T-cell (primary cell): ENCODE measurements at regions of chr12 and their contacts with region 1.

Region 1: GRCh38 chr12:47397664-47398281 is 308.1 kb downstream of the RPAP3 start:
- DNase-seq: peak in 21 of 35 experiments; percentile 22 to 73 (median 29)
- ATAC-seq: peak; percentile 88 to 90 (median 89)
- H3K4me3 ChIP-seq: no peak overlapping the region
- H3K4me3 Mint-ChIP-seq: peak overlapping the region; percentile 18 to 49 (median 36)
- H3K27ac ChIP-seq: peak overlapping the region; percentile 22
- H3K27ac Mint-ChIP-seq: peak overlapping the region; percentile 87 to 93
- H3K4me1 ChIP-seq: peaks cover 5 to 29% of the 10 kb centered on the region in 2 experiments
- H3K4me1 Mint-ChIP-seq: peaks cover 41 to 70% (median 49%) of the 10 kb centered on the region in 3 donors
- H3K27me3 ChIP-seq: no peaks in the 10 kb centered on the region
- H3K27me3 Mint-ChIP-seq: no peaks in the 10 kb centered on the region

Region 2: DNA sequence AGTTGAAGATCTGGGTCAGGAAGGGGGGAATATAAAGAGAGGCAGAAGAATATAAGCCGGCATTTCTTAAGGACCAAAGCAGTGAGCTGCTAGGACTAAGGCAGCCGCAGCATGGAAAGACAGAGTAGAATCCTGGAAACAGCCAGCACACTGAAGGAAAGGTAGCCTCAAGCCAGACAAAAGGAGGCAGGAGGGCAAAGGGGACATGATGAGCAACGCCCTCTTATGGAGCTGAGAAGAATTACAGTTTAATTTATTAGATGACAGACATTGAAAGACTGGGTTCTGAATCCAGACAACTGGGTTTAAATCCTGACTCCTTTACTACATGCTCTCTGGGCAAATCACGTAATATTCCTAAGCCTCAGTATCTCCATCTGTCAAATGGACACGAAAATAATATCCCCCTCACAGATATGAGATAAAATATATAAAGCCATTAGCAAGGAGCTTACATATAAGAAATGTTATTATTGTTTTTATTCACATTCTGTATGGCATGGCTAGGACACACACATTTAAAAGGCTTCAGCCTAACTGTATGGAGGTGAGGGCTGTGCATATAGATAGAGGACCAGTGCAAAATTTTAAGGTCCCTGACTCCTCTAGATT is 326.4 kb before region 1 on chr12:
- CTCF ChIA-PET with region 1: interaction called, 4 to 15 read pairs
- POLR2A ChIA-PET with region 1: no interaction called
- DNase-seq: peak in 1 of 35 experiments; percentile 52
- ATAC-seq: no peak
- H3K4me3 ChIP-seq: no peak overlapping the region
- H3K4me3 Mint-ChIP-seq: no peak overlapping the region
- H3K27ac ChIP-seq: no peak overlapping the region
- H3K27ac Mint-ChIP-seq: no peak overlapping the region
- H3K4me1 ChIP-seq: no peaks in the 10 kb centered on the region
- H3K4me1 Mint-ChIP-seq: peaks cover 2 to 6% (median 6%) of the 10 kb centered on the region in 3 donors
- H3K27me3 ChIP-seq: no peaks in the 10 kb centered on the region
- H3K27me3 Mint-ChIP-seq: no peaks in the 10 kb centered on the region

Region 3: DNA sequence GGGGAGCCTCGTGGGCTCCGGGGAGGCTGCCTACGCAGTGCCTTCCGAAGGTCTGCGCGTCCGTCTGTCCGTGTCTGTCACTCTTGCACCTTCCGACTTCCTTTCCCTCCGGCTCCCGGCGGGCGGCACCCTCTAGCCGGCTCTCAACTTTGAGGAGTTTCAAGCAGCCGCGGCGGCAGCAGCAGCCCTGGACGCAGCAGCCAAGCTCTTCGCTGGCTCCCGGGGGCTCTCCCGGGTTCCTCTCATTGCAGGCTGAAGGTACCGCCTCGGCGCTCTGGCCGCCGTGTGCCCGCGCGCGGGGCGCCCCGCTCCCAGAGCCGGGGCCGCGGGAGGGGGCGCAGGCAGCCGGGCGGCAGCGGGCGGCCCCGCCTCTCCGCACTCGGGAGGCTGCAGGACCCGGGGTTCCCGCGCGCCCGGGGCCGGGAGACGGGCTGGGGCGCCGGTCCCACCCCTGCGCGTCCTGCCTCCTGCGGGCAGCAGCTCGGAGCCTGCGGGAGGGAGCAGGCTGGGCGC is 318.2 kb before region 1 on chr12 and contains the starts of genes AMIGO2 and PCED1B:
- CTCF ChIA-PET with region 1: interaction called in 1 of 2 experiments, 12 read pairs
- POLR2A ChIA-PET with region 1: no interaction called
- DNase-seq: peak; percentile 29 to 71 (median 48)
- ATAC-seq: peak; percentile 60 to 63 (median 61)
- H3K4me3 ChIP-seq: peak within 1 kb of the TSS; percentile 86 to 99
- H3K4me3 Mint-ChIP-seq: peak within 1 kb of the TSS; percentile 92 to 99 (median 96)
- H3K27ac ChIP-seq: peak within 1 kb of the TSS; percentile 85
- H3K27ac Mint-ChIP-seq: peak within 1 kb of the TSS; percentile 93 to 95
- H3K4me1 ChIP-seq: peaks cover 14 to 35% of the 10 kb centered on the region in 2 experiments
- H3K4me1 Mint-ChIP-seq: peaks cover 71 to 79% (median 75%) of the 10 kb centered on the region in 3 donors
- H3K27me3 ChIP-seq: no peaks in the 10 kb centered on the region
- H3K27me3 Mint-ChIP-seq: no peaks in the 10 kb centered on the region
- total RNA-seq, gene AMIGO2: 9.6 to 15.4 (median 14.2) TPM
- total RNA-seq, gene PCED1B: 53.7 to 159 (median 119) TPM

Region 4: DNA sequence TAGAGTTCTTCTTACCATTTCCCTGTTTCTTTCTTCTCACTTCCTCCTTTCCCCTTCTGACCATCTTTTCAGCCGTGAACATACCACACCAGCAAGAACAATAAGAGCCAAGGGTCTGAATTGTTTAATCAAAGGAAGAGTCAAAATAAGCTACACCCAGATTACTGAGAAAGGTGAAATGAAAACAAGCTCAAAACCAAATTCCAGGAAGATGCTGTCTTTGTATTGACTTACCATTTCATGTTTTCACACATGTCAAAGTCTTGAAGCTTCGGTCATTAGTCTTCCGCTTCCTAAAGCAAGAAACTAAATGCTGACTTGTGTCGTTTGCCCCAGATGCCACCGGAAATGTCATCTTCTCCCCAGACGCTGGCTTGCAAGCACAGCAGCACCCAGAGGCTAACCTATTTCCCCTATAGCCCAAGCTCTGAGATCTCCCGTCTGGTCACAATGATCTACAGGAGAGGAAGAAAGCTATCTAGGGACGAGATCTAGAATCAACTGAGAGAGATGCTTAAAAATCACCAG is 181.6 kb before region 1 on chr12:
- CTCF ChIA-PET with region 1: interaction called, 6 to 15 read pairs
- POLR2A ChIA-PET with region 1: interaction called in 1 of 2 experiments, 8 read pairs
- DNase-seq: peak; percentile 44 to 85 (median 64)
- ATAC-seq: peak; percentile 67 to 72 (median 71)
- H3K4me3 ChIP-seq: peak overlapping the region; percentile 73 to 79
- H3K4me3 Mint-ChIP-seq: peak overlapping the region; percentile 91 to 96 (median 95)
- H3K27ac ChIP-seq: peak overlapping the region; percentile 75
- H3K27ac Mint-ChIP-seq: peak overlapping the region; percentile 96
- H3K4me1 ChIP-seq: peaks cover 27% of the 10 kb centered on the region in 2 experiments
- H3K4me1 Mint-ChIP-seq: peaks cover 38 to 47% (median 41%) of the 10 kb centered on the region in 3 donors
- H3K27me3 ChIP-seq: no peaks in the 10 kb centered on the region
- H3K27me3 Mint-ChIP-seq: no peaks in the 10 kb centered on the region

Region 5: DNA sequence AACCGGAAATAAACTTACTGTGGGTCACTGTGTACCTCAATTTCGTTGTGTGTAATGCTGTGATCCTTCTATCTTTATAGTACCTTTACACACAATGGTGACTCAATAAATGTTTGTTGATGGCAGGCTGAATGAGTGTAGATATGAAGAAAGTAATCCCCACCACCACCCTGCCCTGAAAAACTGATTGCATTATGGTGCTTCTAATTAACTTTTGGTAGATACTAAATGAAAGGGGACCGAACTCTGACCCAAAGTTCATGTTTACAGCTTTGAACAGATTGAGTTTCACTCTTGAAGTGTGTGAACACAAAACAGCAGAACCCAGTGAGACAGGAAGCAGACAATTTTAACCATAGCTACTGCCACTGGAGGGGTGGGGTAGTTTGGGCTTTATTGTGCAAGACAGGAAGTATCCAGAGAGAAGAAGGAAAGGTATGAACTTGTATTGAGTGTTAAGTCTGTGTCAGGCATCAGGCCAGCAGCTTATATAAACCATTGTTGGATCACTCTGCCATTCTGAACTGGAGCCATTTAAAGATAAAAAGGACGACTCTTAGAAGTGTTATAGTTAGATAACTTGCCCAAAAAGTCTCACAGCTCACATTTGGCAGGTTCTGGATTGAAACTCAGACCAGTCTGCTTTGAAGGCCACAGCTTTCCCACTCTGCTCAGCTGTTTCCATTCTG is 121.0 kb before region 1 on chr12:
- CTCF ChIA-PET with region 1: interaction called, 3 to 10 read pairs
- POLR2A ChIA-PET with region 1: no interaction called
- DNase-seq: peak; percentile 29 to 83 (median 62)
- ATAC-seq: peak; percentile 95 to 99 (median 96)
- H3K4me3 ChIP-seq: peak overlapping the region; percentile 16 to 41
- H3K4me3 Mint-ChIP-seq: peak overlapping the region; percentile 22 to 65 (median 50)
- H3K27ac ChIP-seq: peak overlapping the region; percentile 92
- H3K27ac Mint-ChIP-seq: peak overlapping the region; percentile 81 to 93
- H3K4me1 ChIP-seq: peaks cover 35 to 57% of the 10 kb centered on the region in 2 experiments
- H3K4me1 Mint-ChIP-seq: peaks cover 75 to 90% (median 75%) of the 10 kb centered on the region in 3 donors
- H3K27me3 ChIP-seq: no peaks in the 10 kb centered on the region
- H3K27me3 Mint-ChIP-seq: no peaks in the 10 kb centered on the region

Region 6: GRCh38 chr12:47343677-47344567 is 53.9 kb before region 1 on chr12:
- CTCF ChIA-PET with region 1: no interaction called
- POLR2A ChIA-PET with region 1: no interaction called
- DNase-seq: no peak
- ATAC-seq: no peak
- H3K4me3 ChIP-seq: no peak overlapping the region
- H3K4me3 Mint-ChIP-seq: no peak overlapping the region
- H3K27ac ChIP-seq: no peak overlapping the region
- H3K27ac Mint-ChIP-seq: peak overlapping the region in 1 of 2 donors; percentile 3
- H3K4me1 ChIP-seq: peaks cover 0 to 6% of the 10 kb centered on the region in 2 experiments
- H3K4me1 Mint-ChIP-seq: peaks cover 6 to 23% (median 15%) of the 10 kb centered on the region in 3 donors
- H3K27me3 ChIP-seq: no peaks in the 10 kb centered on the region
- H3K27me3 Mint-ChIP-seq: no peaks in the 10 kb centered on the region

Region 7: DNA sequence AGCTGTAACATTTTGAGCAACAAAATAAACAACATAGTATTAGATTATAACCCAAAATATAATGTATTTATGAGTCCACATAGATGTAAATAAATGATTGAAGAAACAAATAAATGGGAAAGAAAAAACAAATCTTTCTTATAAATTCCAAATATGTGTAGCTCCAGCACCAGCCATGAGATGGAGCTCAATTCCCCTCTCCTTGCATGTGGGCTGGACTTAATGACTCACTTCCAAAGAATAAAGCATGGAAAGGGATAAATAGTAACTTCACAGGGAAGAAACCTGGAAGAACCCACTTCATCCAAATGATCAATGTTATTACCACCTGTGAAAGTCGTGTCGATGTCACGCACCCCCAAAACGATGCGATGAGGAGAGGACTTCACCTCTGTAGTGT is 149.3 kb after region 1 on chr12:
- CTCF ChIA-PET with region 1: no interaction called
- POLR2A ChIA-PET with region 1: no interaction called
- DNase-seq: no peak
- ATAC-seq: no peak
- H3K4me3 ChIP-seq: no peak overlapping the region
- H3K4me3 Mint-ChIP-seq: no peak overlapping the region
- H3K27ac ChIP-seq: no peak overlapping the region
- H3K27ac Mint-ChIP-seq: no peak overlapping the region
- H3K4me1 ChIP-seq: no peaks in the 10 kb centered on the region
- H3K4me1 Mint-ChIP-seq: peaks cover 1 to 5% (median 2%) of the 10 kb centered on the region in 3 donors
- H3K27me3 ChIP-seq: no peaks in the 10 kb centered on the region
- H3K27me3 Mint-ChIP-seq: peaks cover 0 to 9% of the 10 kb centered on the region in 2 donors